ENCODE measurements at regions of chr1 and their contacts with region 1.

Region 1: DNA sequence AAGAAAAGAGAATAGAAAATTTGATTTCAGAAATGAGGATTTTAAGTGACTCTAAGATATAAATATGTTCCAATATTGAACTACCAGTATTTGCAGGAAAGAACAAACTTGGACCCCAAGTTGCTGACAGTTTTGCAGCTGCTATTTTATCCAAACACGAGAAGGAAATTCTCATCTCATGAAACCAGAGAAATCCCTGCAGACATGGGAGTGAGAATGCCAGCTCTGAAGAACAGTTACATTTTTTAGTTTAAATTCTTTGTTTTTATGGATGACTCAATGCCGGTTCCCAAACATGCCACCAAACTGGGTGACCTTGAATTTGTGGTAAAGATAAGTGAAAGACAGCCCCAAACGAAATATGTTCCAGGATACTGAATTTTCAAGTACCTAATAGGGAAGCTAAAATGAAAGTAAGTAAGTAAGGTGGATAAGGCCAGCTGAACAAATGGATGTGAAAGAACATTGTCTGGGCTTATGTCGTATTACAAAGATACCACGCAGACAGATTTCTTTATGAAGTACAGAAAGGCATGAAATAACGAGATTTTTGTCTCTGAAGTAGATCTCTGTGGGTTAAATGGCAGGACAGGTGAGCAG is 19.9 kb downstream of the TLR5 start:
- DNase-seq: peak; percentile 22
- H3K4me3 ChIP-seq: no peak overlapping the region
- H3K27ac ChIP-seq: no peak overlapping the region
- H3K4me1 ChIP-seq: peaks cover 7% of the 10 kb centered on the region
- H3K27me3 ChIP-seq: no peaks in the 10 kb centered on the region
- CTCF ChIP-seq: no peak
- POLR2A ChIP-seq: no peak

Region 2: GRCh38 chr1:222002503-222002902 is 1120.6 kb before region 1 on chr1:
- CTCF ChIA-PET with region 1: no interaction called
- POLR2A ChIA-PET with region 1: no interaction called
- dilution Hi-C with region 1: no loop called
- intact Hi-C with region 1: no loop called
- DNase-seq: no peak
- H3K4me3 ChIP-seq: no peak overlapping the region
- H3K27ac ChIP-seq: no peak overlapping the region
- H3K4me1 ChIP-seq: no peaks in the 10 kb centered on the region
- H3K27me3 ChIP-seq: no peaks in the 10 kb centered on the region
- CTCF ChIP-seq: no peak
- POLR2A ChIP-seq: no peak

Region 3: DNA sequence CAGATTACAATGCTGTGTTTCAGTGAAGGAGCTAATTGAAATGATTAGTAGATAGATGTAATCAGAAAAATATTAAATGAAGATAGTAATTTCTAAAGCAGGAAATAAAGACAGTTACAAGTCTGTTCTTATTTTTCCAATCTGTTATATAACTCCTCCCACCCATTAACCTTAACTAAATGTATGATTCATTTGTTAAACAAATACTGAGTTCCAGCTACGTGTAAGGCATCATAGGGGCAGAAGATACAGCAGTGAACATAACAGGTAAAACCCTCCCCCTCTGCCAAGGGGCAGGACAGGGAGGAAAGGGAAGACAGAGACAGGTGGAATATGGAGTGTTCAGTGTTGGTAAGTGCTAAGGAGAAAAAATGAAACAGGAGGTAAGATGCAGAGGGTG is 386.1 kb before region 1 on chr1 and contains the start of gene FAM177B:
- CTCF ChIA-PET with region 1: interaction called, 29 read pairs
- POLR2A ChIA-PET with region 1: no interaction called
- dilution Hi-C with region 1: no loop called
- intact Hi-C with region 1: loop called (anchors 1 kb)
- DNase-seq: no peak
- H3K4me3 ChIP-seq: no peak within 1 kb of the TSS
- H3K27ac ChIP-seq: no peak within 1 kb of the TSS
- H3K4me1 ChIP-seq: no peaks in the 10 kb centered on the region
- H3K27me3 ChIP-seq: no peaks in the 10 kb centered on the region
- CTCF ChIP-seq: no peak
- POLR2A ChIP-seq: no peak
- total RNA-seq, gene FAM177B: not detected in 2 replicates

Region 4: GRCh38 chr1:222798116-222798515 is 325.0 kb before region 1 on chr1:
- CTCF ChIA-PET with region 1: interaction called, 56 read pairs
- POLR2A ChIA-PET with region 1: no interaction called
- dilution Hi-C with region 1: no loop called
- intact Hi-C with region 1: no loop called
- DNase-seq: peak; percentile 51
- H3K4me3 ChIP-seq: no peak overlapping the region
- H3K27ac ChIP-seq: no peak overlapping the region
- H3K4me1 ChIP-seq: no peaks in the 10 kb centered on the region
- H3K27me3 ChIP-seq: peaks cover 0 to 4% of the 10 kb centered on the region in 2 experiments
- CTCF ChIP-seq: no peak
- POLR2A ChIP-seq: no peak

Region 5: GRCh38 chr1:223001653-223002634 is 121.2 kb before region 1 on chr1:
- CTCF ChIA-PET with region 1: interaction called, 13 read pairs
- POLR2A ChIA-PET with region 1: no interaction called
- dilution Hi-C with region 1: no loop called
- intact Hi-C with region 1: loop called (anchors 5 kb)
- DNase-seq: no peak
- H3K4me3 ChIP-seq: no peak overlapping the region
- H3K27ac ChIP-seq: no peak overlapping the region
- H3K4me1 ChIP-seq: no peaks in the 10 kb centered on the region
- H3K27me3 ChIP-seq: no peaks in the 10 kb centered on the region
- CTCF ChIP-seq: peak; percentile 19 to 22
- POLR2A ChIP-seq: no peak

Region 6: GRCh38 chr1:223097713-223098112 is 25.4 kb before region 1 on chr1:
- CTCF ChIA-PET with region 1: interaction called, 66 read pairs
- POLR2A ChIA-PET with region 1: no interaction called
- dilution Hi-C with region 1: no loop called
- intact Hi-C with region 1: no loop called
- DNase-seq: no peak
- H3K4me3 ChIP-seq: no peak overlapping the region
- H3K27ac ChIP-seq: no peak overlapping the region
- H3K4me1 ChIP-seq: peaks cover 7% of the 10 kb centered on the region
- H3K27me3 ChIP-seq: peaks cover 0 to 3% of the 10 kb centered on the region in 2 experiments
- CTCF ChIP-seq: no peak
- POLR2A ChIP-seq: no peak

Region 7: DNA sequence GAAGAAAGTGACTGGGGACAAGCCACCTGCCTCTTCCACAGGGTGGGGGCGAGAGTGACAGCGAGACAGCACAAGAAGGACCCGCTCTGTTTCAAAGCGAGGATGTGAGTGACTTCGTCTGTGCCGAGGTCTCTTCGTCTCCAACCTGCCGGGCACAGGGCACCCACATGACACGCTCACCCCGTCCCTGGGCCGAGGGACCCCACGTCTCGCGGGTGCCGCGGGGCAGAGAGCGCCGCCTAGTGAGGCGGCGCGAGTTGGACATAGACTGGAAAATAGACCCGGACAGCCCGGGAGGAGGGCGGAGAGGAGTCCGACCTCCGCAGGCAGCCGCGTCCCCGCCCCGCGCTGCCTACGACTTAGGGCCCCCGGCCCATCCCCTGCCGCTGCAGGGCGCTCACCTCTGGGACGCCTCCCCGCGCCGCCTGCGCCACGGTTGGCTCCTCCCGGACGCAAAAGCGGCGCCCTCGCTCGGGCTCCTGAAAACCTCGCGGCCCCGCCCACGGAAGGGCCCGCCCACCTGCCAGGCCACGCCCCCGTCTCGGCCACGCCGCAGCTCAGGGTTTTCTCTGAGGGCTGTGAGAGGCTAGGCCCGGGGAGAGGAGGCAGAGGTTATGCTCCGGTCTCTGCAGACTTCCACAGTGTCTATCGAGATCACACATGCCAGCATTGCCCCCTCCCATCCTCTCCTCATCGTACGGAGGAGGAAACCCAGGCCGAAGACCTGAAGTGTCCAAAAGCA is 19.9 kb after region 1 on chr1 and contains the start of gene TLR5:
- CTCF ChIA-PET with region 1: interaction called, 11 read pairs
- POLR2A ChIA-PET with region 1: no interaction called
- dilution Hi-C with region 1: no loop called
- intact Hi-C with region 1: no loop called
- DNase-seq: peak; percentile 79
- H3K4me3 ChIP-seq: peak within 1 kb of the TSS; percentile 19 to 59 (median 38)
- H3K27ac ChIP-seq: no peak within 1 kb of the TSS
- H3K4me1 ChIP-seq: peaks cover 4% of the 10 kb centered on the region
- H3K27me3 ChIP-seq: peaks cover 3 to 6% of the 10 kb centered on the region in 2 experiments
- CTCF ChIP-seq: peak; percentile 74 to 90
- POLR2A ChIP-seq: no peak
- total RNA-seq, gene TLR5: 0.15 and 0.16 TPM in 2 replicates